ENCODE measurements at regions of chr2 and their contacts with region 1.

Region 1: GRCh38 chr2:195672668-195673067 is 15.6 kb downstream of the SLC39A10 start:
- DNase-seq: no peak
- H3K4me3 ChIP-seq: no peak overlapping the region
- H3K27ac ChIP-seq: no peak overlapping the region
- H3K4me1 ChIP-seq: no peaks in the 10 kb centered on the region
- H3K27me3 ChIP-seq: no peaks in the 10 kb centered on the region
- CTCF ChIP-seq: no peak

Region 2: DNA sequence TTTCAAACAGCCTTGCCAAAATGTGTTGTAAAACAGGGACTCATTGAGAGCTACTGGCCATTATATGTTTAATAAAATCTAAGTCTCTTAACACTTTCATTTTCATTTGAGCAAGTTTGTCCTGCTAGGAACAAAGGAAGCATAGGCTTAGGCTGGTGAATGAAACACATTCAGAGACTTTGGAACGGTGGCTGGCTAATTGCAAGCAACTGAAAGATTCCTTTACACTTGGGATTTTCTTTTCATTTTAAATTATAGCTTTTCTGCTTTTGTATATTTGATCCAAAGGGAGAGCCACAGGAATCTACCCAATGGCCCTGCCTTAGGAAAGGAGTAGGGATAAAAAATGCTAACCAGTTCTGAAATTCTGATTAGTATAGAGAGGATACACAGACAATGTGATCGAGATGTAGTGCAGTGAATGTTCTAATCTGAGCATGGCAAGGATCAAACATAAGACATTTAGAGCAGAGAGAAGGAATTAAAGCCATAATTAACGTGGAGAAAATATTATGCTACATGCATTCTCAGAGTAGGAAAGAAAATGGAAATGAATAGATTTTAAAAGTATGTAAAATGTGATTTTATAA is 927.0 kb before region 1 on chr2:
- intact Hi-C with region 1: no loop called
- DNase-seq: no peak
- H3K4me3 ChIP-seq: no peak overlapping the region
- H3K27ac ChIP-seq: no peak overlapping the region
- H3K4me1 ChIP-seq: no peaks in the 10 kb centered on the region
- H3K27me3 ChIP-seq: no peaks in the 10 kb centered on the region
- CTCF ChIP-seq: no peak

Region 3: DNA sequence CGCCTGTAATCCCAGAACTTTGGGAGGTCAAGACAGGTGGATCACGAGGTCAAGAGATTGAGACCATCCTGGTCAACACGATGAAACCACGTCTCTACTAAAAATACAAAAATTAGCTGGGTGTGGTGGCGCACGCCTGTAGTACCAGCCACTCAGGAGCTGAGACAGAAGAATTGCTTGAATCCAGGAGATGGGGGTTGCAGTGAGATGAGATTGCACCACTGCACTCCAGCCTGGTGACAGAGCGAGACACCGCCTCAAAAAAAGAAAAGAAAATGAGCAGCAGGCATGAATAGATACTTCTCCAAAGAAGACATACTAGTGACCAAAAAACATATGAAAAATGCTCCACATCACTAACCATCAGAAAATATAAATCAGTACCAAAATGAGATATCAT is 257.4 kb after region 1 on chr2:
- intact Hi-C with region 1: loop called (anchors 10 kb)
- DNase-seq: no peak
- H3K4me3 ChIP-seq: no peak overlapping the region
- H3K27ac ChIP-seq: no peak overlapping the region
- H3K4me1 ChIP-seq: no peaks in the 10 kb centered on the region
- H3K27me3 ChIP-seq: no peaks in the 10 kb centered on the region
- CTCF ChIP-seq: no peak